ENCODE measurements at regions of chr10 and their contacts with region 1.

Region 1: GRCh38 chr10:110354322-110354766 is 49.6 kb upstream of the SMNDC1 start:
- DNase-seq: peak; percentile 98
- H3K4me3 Mint-ChIP-seq: peak overlapping the region; percentile 74
- H3K27ac Mint-ChIP-seq: peak overlapping the region; percentile 99
- H3K4me1 Mint-ChIP-seq: peaks cover 60% of the 10 kb centered on the region
- H3K27me3 Mint-ChIP-seq: no peaks in the 10 kb centered on the region

Region 2: GRCh38 chr10:110210674-110211464 is 143.5 kb before region 1 on chr10:
- CTCF ChIA-PET with region 1: no interaction called
- intact Hi-C with region 1: loop called (anchors 1 kb)
- DNase-seq: peak; percentile 97
- H3K4me3 Mint-ChIP-seq: peak overlapping the region; percentile 96
- H3K27ac Mint-ChIP-seq: peak overlapping the region; percentile 97
- H3K4me1 Mint-ChIP-seq: peaks cover 50% of the 10 kb centered on the region
- H3K27me3 Mint-ChIP-seq: peaks cover 3% of the 10 kb centered on the region

Region 3: GRCh38 chr10:110368002-110368401 is 13.7 kb after region 1 on chr10:
- CTCF ChIA-PET with region 1: interaction called, 62 read pairs
- intact Hi-C with region 1: loop called (anchors 1 kb)
- DNase-seq: peak; percentile 40
- H3K4me3 Mint-ChIP-seq: no peak overlapping the region
- H3K27ac Mint-ChIP-seq: peak overlapping the region; percentile 93
- H3K4me1 Mint-ChIP-seq: peaks cover 75% of the 10 kb centered on the region
- H3K27me3 Mint-ChIP-seq: no peaks in the 10 kb centered on the region

Region 4: DNA sequence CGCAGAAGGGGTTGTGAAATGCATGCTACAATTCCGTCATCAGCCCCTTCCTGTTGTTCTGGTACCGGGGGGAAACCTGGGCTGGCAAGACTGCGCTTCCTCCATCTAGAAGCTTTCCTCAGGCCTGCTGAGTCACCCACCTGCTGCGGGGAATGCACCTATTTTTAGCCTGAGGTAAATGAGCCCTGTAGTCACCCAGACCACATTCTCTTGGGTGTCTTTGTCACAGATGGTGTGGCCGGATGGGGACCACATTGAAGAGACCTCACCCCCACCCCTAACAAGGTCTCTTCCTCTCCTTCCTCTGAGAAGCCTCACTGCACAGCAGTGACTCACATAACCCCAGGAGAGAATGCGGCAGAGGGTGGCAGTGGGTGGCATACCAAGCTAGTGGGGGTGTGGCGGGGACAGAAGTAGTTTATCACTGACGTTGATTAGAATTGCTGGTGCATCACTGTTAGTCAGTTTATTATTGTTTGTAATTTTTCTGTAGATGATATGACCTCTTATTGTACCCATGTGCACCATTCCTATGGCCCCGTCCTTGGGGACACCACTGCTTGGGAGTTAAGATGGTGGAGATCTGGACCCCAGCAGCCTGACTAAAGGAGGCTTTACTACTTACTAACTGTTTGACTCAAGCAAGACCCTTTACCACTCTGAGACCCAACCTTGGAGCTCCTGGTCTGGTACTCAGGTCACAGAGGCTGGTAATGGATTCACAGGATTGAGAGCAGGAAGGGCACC is 60.4 kb after region 1 on chr10:
- CTCF ChIA-PET with region 1: interaction called, 36 read pairs
- intact Hi-C with region 1: loop called (anchors 1 kb)
- DNase-seq: peak; percentile 98
- H3K4me3 Mint-ChIP-seq: peak overlapping the region; percentile 41
- H3K27ac Mint-ChIP-seq: peak overlapping the region; percentile 84
- H3K4me1 Mint-ChIP-seq: peaks cover 73% of the 10 kb centered on the region
- H3K27me3 Mint-ChIP-seq: no peaks in the 10 kb centered on the region

Region 5: DNA sequence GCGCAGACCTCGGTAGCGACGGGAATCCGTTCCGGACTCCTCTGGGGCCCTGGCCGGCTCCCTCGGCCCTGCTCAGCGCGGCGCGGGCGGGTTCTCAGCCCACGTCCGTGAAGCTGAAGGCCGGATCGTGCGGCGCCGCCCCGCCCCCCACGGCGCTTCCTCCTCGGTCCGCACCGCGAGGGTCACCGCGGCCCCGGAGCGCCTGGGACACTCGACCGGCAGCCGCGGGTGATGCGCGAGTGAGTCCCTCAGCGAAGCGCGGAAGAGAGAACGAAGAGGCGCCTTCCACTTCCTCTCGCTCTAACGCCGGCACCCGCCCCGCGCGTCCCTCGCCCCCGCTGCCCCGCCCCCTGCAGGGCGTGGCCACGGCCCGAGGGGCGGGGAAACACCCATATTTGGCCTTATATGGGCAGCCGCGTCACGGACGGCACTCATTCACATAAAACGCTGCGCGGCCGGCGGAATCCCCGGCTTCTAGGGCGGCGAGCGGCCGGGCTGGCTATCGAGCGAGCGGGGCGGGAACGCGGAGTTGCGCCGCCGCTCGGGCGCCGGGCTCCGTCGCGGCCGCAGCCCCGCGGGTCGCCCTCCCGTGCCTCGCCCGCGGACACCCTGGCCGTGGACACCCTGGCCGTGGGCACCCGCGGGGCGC is 143.2 kb after region 1 on chr10 and contains the start of gene DUSP5:
- CTCF ChIA-PET with region 1: interaction called, 64 read pairs
- intact Hi-C with region 1: loop called (anchors 1 kb)
- DNase-seq: peak; percentile 94
- H3K4me3 Mint-ChIP-seq: peak within 1 kb of the TSS; percentile 97
- H3K27ac Mint-ChIP-seq: peak within 1 kb of the TSS; percentile 94
- H3K4me1 Mint-ChIP-seq: peaks cover 43% of the 10 kb centered on the region
- H3K27me3 Mint-ChIP-seq: no peaks in the 10 kb centered on the region
- total RNA-seq, gene DUSP5: 51.0 to 53.5 TPM

Region 6: GRCh38 chr10:110547139-110547761 is 192.9 kb after region 1 on chr10:
- CTCF ChIA-PET with region 1: interaction called, 63 read pairs
- intact Hi-C with region 1: loop called (anchors 1 kb)
- DNase-seq: no peak
- H3K4me3 Mint-ChIP-seq: no peak overlapping the region
- H3K27ac Mint-ChIP-seq: no peak overlapping the region
- H3K4me1 Mint-ChIP-seq: peaks cover 6% of the 10 kb centered on the region
- H3K27me3 Mint-ChIP-seq: peaks cover 19% of the 10 kb centered on the region

Region 7: DNA sequence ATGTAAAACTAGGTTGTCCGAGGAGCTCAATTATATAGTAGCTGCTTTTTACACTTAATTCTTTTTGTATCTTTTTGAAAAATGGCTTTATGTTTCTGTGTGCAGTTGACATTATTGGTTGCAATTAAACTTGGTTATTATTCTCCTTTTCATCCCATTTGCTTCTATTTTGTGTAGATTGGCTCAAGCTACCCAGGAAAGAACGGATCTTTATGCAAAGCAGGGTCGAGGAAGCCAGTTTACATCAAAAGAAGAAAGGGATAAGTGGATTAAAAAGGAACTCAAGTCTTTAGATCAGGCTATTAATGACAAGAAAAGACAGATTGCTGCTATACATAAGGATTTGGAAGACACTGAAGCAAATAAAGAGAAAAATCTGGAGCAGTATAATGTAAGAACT is 229.7 kb after region 1 on chr10:
- CTCF ChIA-PET with region 1: no interaction called
- intact Hi-C with region 1: no loop called
- DNase-seq: no peak
- H3K4me3 Mint-ChIP-seq: no peak overlapping the region
- H3K27ac Mint-ChIP-seq: peak overlapping the region; percentile 5
- H3K4me1 Mint-ChIP-seq: peaks cover 2% of the 10 kb centered on the region
- H3K27me3 Mint-ChIP-seq: no peaks in the 10 kb centered on the region